Gastrocnemius medialis (tissue), 4 donors: ENCODE measurements at regions of chr11 and their contacts with region 1.

Region 1: GRCh38 chr11:130442737-130443136 is 5.7 kb upstream of the ADAMTS15 start:
- DNase-seq: peak in 1 of 2 donors; percentile 18
- ATAC-seq: peak; percentile 56 to 87
- H3K4me3 ChIP-seq: no peak overlapping the region
- H3K27ac ChIP-seq: peak overlapping the region in 3 of 4 donors; percentile 11 to 43 (median 14)
- H3K4me1 ChIP-seq: no peaks in the 10 kb centered on the region
- H3K27me3 ChIP-seq: no peaks in the 10 kb centered on the region
- CTCF ChIP-seq: no peak
- POLR2A ChIP-seq: no peak

Region 2: GRCh38 chr11:130403271-130403804 is 39.4 kb before region 1 on chr11:
- in situ Hi-C with region 1: no loop called
- intact Hi-C with region 1: loop called (anchors 1 kb)
- DNase-seq: no peak
- ATAC-seq: peak; percentile 23 to 61
- H3K4me3 ChIP-seq: no peak overlapping the region
- H3K27ac ChIP-seq: no peak overlapping the region
- H3K4me1 ChIP-seq: peaks cover 22 to 31% of the 10 kb centered on the region in 2 donors
- H3K27me3 ChIP-seq: no peaks in the 10 kb centered on the region
- CTCF ChIP-seq: no peak
- POLR2A ChIP-seq: no peak

Region 3: DNA sequence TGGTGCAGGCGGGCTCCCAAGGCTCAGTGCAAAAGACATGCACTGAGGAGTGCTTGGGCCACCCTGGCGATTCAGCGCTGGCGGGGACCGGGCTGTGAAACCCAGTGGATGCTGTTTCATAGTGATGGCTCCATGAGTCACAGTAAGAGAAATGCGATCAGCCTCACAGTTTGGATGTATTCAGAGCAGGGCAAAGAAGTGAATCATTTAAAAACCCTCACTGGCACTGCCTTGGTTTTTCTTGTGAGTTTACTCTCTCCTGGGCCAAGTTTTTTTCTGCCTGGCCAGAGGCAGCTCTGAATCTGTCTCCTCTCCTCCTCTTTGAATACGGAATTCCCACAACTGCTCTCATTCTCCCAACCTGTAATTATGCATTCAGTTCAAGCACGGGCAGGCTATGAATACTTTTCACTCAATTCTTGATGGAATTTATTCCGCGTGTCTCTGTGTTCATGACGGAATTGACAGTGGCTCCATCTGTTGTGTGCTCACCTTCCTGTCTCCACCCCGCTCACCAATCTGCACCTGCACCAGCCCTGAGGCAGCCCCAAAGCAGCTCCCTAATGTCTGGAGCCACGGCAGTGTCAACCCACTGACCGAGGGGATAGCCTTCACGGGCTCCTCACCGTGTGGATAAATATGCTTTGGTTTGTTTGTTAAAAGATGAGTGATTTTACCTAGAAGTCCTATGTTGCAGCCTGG is 29.2 kb before region 1 on chr11:
- in situ Hi-C with region 1: no loop called
- intact Hi-C with region 1: no loop called
- DNase-seq: no peak
- ATAC-seq: peak; percentile 62 to 64
- H3K4me3 ChIP-seq: no peak overlapping the region
- H3K27ac ChIP-seq: no peak overlapping the region
- H3K4me1 ChIP-seq: peaks cover 0 to 5% of the 10 kb centered on the region in 2 donors
- H3K27me3 ChIP-seq: peaks cover 0 to 16% (median 0%) of the 10 kb centered on the region in 3 donors
- CTCF ChIP-seq: no peak
- POLR2A ChIP-seq: no peak

Region 4: DNA sequence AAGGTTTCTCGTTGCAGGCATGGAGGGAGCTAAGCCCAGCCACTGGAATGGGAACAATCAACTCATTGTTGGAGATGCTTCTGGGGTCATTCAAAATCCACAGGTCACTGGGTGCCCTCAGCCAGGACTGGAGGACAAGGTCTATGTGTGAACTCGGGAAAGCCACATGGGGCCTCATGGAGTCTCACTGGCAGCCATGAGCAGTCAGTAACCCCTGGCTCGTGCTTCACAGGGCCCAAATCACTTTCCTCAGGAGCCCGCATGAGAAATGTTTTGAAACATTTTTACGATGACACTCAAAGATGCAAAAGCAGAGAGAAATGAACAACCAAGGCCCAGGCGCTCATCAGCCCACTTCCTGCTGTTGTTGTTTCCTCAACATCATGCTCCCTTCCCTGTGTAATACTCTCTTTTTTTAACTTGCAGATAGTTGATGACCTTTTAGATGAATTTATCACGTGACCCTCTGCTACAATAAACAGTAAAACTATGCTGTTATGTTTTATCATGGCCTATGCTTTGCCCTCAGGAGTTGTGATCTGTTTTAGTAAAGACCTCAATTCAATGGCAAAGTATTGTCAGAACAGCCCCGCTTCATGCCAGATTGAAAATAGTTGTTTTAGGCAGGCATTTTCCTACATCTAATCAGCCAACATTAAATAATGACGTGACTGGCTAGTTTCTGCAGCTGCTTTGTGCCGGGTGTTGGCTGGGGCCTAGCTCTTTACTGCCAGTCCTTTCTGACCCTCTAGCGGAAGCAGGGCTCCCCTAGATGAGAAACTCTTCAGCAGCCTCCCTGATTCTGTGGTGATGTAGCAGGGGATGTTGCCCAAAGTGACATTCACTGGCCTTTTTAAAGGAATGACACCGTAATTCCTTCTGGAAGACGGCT is 45.4 kb after region 1 on chr11:
- in situ Hi-C with region 1: no loop called
- intact Hi-C with region 1: no loop called
- DNase-seq: no peak
- ATAC-seq: no peak
- H3K4me3 ChIP-seq: no peak overlapping the region
- H3K27ac ChIP-seq: no peak overlapping the region
- H3K4me1 ChIP-seq: no peaks in the 10 kb centered on the region
- H3K27me3 ChIP-seq: no peaks in the 10 kb centered on the region
- CTCF ChIP-seq: no peak
- POLR2A ChIP-seq: no peak